ENCODE measurements at regions of chr1 and their contacts with region 1.

Region 1: DNA sequence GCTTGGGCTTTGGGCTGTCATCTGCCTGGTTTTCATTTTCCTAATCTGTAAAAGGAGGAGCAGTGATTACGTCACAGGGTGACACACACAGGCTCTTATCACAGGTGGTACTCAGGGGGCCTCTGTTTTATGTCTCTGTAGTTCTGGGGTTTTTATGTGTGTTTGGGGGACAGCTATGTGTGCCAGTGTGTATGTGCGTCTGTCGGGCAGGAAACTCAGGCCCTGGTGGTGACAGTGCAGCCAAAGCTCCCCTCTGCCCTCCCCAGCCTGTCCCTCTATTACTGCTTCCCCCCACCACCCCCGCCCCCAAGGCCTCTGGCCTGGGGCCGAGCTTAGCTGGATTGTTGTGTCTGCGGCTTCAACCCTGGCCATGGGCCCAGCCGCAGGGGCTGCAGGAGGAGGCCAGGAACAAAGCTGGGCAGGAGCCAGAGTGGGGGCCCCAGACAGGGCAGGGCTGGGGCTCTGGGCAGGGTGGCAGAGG is 13.3 kb downstream of the MFAP2 start:
- DNase-seq: peak; percentile 51 to 83 (median 75)
- H3K4me3 ChIP-seq: no peak overlapping the region
- H3K27ac ChIP-seq: peak overlapping the region in 1 of 5 donors; percentile 10
- H3K4me1 ChIP-seq: peaks cover 6 to 11% of the 10 kb centered on the region in 2 donors
- H3K27me3 ChIP-seq: no peaks in the 10 kb centered on the region
- CTCF ChIP-seq: no peak
- POLR2A ChIP-seq: no peak

Region 2: GRCh38 chr1:17043656-17044055 is 76.5 kb after region 1 on chr1:
- intact Hi-C with region 1: loop called in 1 of 2 experiments (anchors 5 kb)
- DNase-seq: no peak
- H3K4me3 ChIP-seq: no peak overlapping the region
- H3K27ac ChIP-seq: no peak overlapping the region
- H3K4me1 ChIP-seq: peaks cover 8 to 30% of the 10 kb centered on the region in 2 donors
- H3K27me3 ChIP-seq: no peaks in the 10 kb centered on the region
- CTCF ChIP-seq: no peak
- POLR2A ChIP-seq: no peak

Measured in adrenal gland (tissue), 19 donors.